Cardiac septum (tissue), 1 donor: ENCODE measurements at regions of chr17 and their contacts with region 1.

Region 1: DNA sequence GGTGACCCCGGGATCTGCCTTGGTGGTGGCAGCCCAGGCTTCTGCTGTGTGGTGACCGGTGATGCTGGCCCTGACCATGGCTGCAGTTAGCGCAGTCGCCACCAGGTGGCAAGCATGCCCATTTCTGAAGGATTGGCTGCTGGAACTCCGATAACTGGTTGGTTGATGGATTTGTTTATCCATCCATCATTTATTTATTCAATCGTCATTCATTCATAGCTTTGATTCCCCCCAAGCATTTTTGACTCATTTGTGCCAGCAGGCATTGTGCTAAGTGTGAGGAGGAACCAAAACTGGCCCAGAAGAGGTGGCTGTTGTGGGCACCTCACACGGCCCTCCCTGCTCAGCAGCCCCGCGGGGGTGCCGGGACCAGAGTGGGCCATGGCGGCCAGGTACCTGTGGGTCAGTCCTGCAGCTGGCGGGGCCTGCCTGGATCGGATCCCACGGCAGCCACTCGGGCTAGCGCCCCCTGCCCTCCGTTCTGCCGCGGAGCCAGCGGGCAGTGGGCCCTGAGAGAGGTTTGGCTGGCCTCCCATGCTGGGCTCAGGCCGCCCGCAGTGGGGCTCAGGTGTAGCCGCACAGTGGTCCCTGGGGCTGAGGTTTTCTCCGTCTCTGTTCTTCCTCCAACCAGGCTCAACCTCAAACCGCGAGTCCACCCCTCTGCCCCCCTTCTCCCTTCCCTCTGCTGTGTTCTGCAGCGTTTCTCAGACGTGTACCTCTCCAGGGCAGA is 28.8 kb upstream of the ITGA3 start:
- DNase-seq: peak; percentile 89

Region 2: GRCh38 chr17:49873466-49873865 is 153.6 kb before region 1 on chr17:
- intact Hi-C with region 1: no loop called
- DNase-seq: no peak

Region 3: GRCh38 chr17:50056231-50056960 is 29.3 kb after region 1 on chr17:
- intact Hi-C with region 1: loop called (anchors 2 kb)
- DNase-seq: no peak

Region 4: GRCh38 chr17:50087246-50087911 is 60.3 kb after region 1 on chr17:
- intact Hi-C with region 1: loop called (anchors 1 kb)
- DNase-seq: no peak